CD8-positive, alpha-beta T cell (primary cell): ENCODE measurements at regions of chr3 and their contacts with region 1.

Region 1: DNA sequence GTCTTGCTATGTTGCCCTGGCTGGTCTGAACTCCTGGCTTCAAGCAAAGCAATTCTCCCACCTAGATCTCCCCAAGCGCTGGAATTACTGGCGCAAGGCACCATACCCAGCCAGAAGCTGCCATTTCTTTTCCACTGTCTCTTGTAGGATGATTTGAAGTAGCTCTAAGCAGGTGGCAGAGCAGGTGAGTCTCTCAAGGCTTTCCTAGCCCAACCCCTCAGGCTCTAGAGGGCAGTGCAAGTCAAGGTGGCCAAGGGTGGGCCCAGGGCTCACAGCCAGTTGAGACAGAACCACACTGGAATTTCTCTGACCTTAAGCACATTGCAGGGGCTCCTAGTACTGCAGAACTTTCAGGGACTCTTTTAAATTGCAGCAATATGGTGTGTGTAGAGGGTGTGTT is 15.6 kb upstream of the DAG1 start:
- DNase-seq: no peak
- ATAC-seq: no peak
- H3K4me3 ChIP-seq: no peak overlapping the region
- H3K4me3 Mint-ChIP-seq: no peak overlapping the region
- H3K27ac ChIP-seq: no peak overlapping the region
- H3K27ac Mint-ChIP-seq: no peak overlapping the region
- H3K4me1 ChIP-seq: no peaks in the 10 kb centered on the region
- H3K4me1 Mint-ChIP-seq: no peaks in the 10 kb centered on the region
- H3K27me3 ChIP-seq: no peaks in the 10 kb centered on the region
- H3K27me3 Mint-ChIP-seq: no peaks in the 10 kb centered on the region
- CTCF ChIP-seq: no peak

Region 2: DNA sequence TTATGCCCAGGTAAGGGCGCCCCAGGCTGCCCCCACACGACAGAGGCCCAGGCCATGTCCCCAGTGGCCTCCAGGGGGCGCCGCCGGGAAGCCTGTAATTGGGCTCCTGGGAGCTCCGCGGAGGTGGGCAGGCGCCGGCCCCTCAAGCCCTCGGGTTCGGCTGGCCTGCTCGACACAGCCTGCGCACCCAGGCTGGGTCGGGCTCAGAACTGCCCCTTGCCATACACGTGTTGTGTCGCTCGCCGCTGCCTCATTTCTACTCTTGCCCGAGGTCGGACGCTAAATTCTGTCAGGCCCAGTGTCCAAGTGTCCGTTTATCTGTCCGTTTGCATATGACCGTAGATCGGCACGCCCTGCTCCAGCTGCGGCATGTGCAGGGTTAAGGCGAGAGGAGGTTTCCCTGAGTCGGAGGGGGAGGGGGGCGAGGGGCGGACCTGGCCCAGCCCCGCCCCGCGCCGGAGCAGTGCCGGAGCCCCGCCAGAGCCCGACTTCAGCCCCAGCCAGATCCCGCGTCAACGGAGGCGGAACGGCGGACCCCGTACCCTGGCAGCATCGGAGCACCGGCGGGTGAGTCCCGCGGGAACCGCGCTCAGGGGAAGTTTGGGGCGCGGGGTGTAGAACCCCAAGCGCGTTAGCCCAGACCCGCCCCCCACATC is 283.2 kb before region 1 on chr3 and contains the start of gene KLHDC8B:
- CTCF ChIA-PET with region 1: interaction called, 22 read pairs
- POLR2A ChIA-PET with region 1: interaction called, 3 read pairs
- intact Hi-C with region 1: loop called (anchors 1 kb)
- DNase-seq: peak; percentile 68 to 90 (median 84)
- ATAC-seq: peak; percentile 85
- H3K4me3 ChIP-seq: peak within 1 kb of the TSS; percentile 72 to 88
- H3K4me3 Mint-ChIP-seq: peak within 1 kb of the TSS; percentile 89
- H3K27ac ChIP-seq: peak within 1 kb of the TSS; percentile 3 to 40
- H3K27ac Mint-ChIP-seq: peak within 1 kb of the TSS; percentile 79
- H3K4me1 ChIP-seq: peaks cover 24% of the 10 kb centered on the region
- H3K4me1 Mint-ChIP-seq: peaks cover 25% of the 10 kb centered on the region
- H3K27me3 ChIP-seq: no peaks in the 10 kb centered on the region
- H3K27me3 Mint-ChIP-seq: no peaks in the 10 kb centered on the region
- CTCF ChIP-seq: peak; percentile 97
- total RNA-seq, gene KLHDC8B: 1.1 to 1.6 TPM

Region 3: GRCh38 chr3:49327485-49327884 is 127.0 kb before region 1 on chr3:
- CTCF ChIA-PET with region 1: interaction called, 11 read pairs
- POLR2A ChIA-PET with region 1: interaction called, 3 read pairs
- intact Hi-C with region 1: no loop called
- DNase-seq: peak in 2 of 9 experiments; percentile 19 to 26
- ATAC-seq: no peak
- H3K4me3 ChIP-seq: no peak overlapping the region
- H3K4me3 Mint-ChIP-seq: no peak overlapping the region
- H3K27ac ChIP-seq: no peak overlapping the region
- H3K27ac Mint-ChIP-seq: no peak overlapping the region
- H3K4me1 ChIP-seq: no peaks in the 10 kb centered on the region
- H3K4me1 Mint-ChIP-seq: peaks cover 17% of the 10 kb centered on the region
- H3K27me3 ChIP-seq: no peaks in the 10 kb centered on the region
- H3K27me3 Mint-ChIP-seq: no peaks in the 10 kb centered on the region
- CTCF ChIP-seq: no peak

Region 4: DNA sequence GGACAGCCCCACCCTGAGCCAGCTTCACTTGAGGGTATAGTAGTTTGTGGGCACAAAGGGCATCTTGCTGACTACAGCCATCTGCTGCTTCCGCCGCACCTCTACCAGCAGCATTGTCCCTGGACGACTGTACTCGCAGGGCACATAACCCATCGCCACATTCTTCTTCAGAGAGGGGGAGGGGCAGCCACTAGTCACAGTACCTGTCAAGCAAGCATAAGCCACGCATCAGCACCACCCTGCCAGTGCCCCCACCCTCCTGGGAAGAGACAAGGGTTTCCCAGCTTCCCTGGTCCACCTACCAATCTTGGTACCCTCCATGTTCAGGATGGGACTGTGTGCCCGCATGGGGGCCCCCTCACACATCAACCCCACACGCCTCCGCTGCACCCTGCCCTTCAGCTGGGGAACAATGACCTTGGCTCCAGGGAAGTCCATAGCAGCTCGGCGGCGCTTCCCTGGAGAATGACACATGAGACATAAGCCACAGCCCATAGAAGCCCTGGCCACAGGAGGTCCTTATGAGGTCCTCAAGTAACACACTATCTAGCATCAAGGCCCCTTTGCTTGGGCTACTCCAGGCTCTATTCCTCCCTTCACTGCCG is 36.8 kb before region 1 on chr3:
- CTCF ChIA-PET with region 1: interaction called, 47 read pairs
- POLR2A ChIA-PET with region 1: interaction called, 9 read pairs
- intact Hi-C with region 1: loop called (anchors 1 kb)
- DNase-seq: no peak
- ATAC-seq: no peak
- H3K4me3 ChIP-seq: no peak overlapping the region
- H3K4me3 Mint-ChIP-seq: no peak overlapping the region
- H3K27ac ChIP-seq: peak overlapping the region in 1 of 2 experiments; percentile 94
- H3K27ac Mint-ChIP-seq: peak overlapping the region; percentile 98
- H3K4me1 ChIP-seq: peaks cover 62% of the 10 kb centered on the region
- H3K4me1 Mint-ChIP-seq: peaks cover 57% of the 10 kb centered on the region
- H3K27me3 ChIP-seq: no peaks in the 10 kb centered on the region
- H3K27me3 Mint-ChIP-seq: no peaks in the 10 kb centered on the region
- CTCF ChIP-seq: no peak

Region 5: GRCh38 chr3:49434731-49435130 is 19.7 kb before region 1 on chr3:
- CTCF ChIA-PET with region 1: interaction called, 10 read pairs
- POLR2A ChIA-PET with region 1: no interaction called
- intact Hi-C with region 1: loop called in 1 of 2 experiments (anchors 2 kb)
- DNase-seq: no peak
- ATAC-seq: no peak
- H3K4me3 ChIP-seq: no peak overlapping the region
- H3K4me3 Mint-ChIP-seq: no peak overlapping the region
- H3K27ac ChIP-seq: no peak overlapping the region
- H3K27ac Mint-ChIP-seq: no peak overlapping the region
- H3K4me1 ChIP-seq: peaks cover 3% of the 10 kb centered on the region
- H3K4me1 Mint-ChIP-seq: peaks cover 2% of the 10 kb centered on the region
- H3K27me3 ChIP-seq: no peaks in the 10 kb centered on the region
- H3K27me3 Mint-ChIP-seq: no peaks in the 10 kb centered on the region
- CTCF ChIP-seq: no peak